Endothelial cell of umbilical vein (primary cell): ENCODE measurements at regions of chr2 and their contacts with region 1.

Region 1: DNA sequence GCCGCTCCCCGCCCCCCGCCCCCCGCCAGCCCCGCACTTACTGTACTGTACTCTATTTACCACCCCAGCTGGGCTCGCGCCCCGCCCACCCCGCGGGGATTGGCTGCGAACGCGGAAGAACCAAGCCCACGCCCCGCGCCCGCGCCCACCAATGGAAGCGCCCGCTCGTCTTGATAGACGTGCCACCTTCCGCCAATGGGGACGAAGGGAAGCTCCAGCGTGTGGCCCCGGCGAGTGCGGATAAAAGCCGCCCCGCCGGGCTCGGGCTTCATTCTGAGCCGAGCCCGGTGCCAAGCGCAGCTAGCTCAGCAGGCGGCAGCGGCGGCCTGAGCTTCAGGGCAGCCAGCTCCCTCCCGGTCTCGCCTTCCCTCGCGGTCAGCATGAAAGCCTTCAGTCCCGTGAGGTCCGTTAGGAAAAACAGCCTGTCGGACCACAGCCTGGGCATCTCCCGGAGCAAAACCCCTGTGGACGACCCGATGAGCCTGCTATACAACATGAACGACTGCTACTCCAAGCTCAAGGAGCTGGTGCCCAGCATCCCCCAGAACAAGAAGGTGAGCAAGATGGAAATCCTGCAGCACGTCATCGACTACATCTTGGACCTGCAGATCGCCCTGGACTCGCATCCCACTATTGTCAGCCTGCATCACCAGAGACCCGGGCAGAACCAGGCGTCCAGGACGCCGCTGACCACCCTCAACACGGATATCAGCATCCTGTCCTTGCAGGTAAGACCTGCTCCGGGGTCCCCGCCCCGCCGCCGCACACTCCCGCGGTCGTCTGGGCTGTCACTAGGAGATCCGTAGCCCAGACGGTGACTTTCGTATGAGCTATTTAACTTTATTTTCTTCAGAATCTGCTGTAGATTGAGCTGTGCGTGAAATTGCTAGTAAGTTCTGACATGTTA is at the start of gene ID2:
- DNase-seq: peak; percentile 99
- H3K4me3 ChIP-seq: peak within 1 kb of the TSS; percentile 49 to 73 (median 52)
- H3K27ac ChIP-seq: peak within 1 kb of the TSS; percentile 98
- H3K4me1 ChIP-seq: peaks cover 61% of the 10 kb centered on the region
- H3K27me3 ChIP-seq: peaks cover 8 to 25% of the 10 kb centered on the region in 2 experiments
- CTCF ChIP-seq: no peak
- POLR2A ChIP-seq: peak; percentile 99
- total RNA-seq, gene ID2: 4.1 and 4.7 TPM in 2 replicates

Region 2: GRCh38 chr2:6826081-6826913 is 1855.7 kb before region 1 on chr2:
- CTCF ChIA-PET with region 1: no interaction called
- POLR2A ChIA-PET with region 1: no interaction called
- dilution Hi-C with region 1: no loop called
- intact Hi-C with region 1: loop called (anchors 10 kb)
- DNase-seq: peak; percentile 60
- H3K4me3 ChIP-seq: no peak overlapping the region
- H3K27ac ChIP-seq: peak overlapping the region; percentile 52
- H3K4me1 ChIP-seq: peaks cover 12% of the 10 kb centered on the region
- H3K27me3 ChIP-seq: peaks cover 0 to 2% of the 10 kb centered on the region in 2 experiments
- CTCF ChIP-seq: peak; percentile 50 to 69
- POLR2A ChIP-seq: no peak

Region 3: DNA sequence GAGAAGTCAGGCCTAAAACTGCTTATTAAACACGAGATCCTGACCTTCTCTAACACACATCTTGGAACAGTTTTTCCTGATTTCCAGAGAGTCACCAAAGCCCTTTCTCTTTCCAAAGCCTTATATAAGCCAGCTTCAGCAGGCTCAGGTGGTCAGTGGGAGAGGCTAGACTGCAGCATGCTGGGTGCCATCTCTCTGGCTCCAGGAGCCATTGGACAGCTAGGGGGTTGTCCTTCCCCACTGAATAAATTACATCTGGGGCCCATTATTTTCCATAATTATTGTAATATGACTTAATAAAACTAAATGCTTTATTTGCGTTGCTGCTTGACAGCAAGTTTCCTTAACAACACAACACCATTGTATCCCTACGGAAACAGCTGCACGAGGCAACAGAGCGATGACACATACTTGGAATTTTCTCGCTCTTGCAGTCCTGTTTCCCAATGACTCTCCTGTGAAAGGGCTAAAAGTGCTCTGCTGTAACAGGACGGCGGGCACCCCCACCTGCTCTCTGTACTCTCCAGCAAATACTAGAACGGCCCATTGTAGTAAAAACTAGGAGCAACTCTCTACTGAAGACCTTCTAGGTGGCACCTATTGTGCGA is 1604.3 kb before region 1 on chr2:
- CTCF ChIA-PET with region 1: no interaction called
- POLR2A ChIA-PET with region 1: no interaction called
- dilution Hi-C with region 1: no loop called
- intact Hi-C with region 1: loop called (anchors 5 kb)
- DNase-seq: peak; percentile 89
- H3K4me3 ChIP-seq: no peak overlapping the region
- H3K27ac ChIP-seq: peak overlapping the region; percentile 67
- H3K4me1 ChIP-seq: peaks cover 6% of the 10 kb centered on the region
- H3K27me3 ChIP-seq: no peaks in the 10 kb centered on the region
- CTCF ChIP-seq: no peak
- POLR2A ChIP-seq: no peak

Region 4: GRCh38 chr2:7118606-7119503 is 1563.2 kb before region 1 on chr2:
- CTCF ChIA-PET with region 1: no interaction called
- POLR2A ChIA-PET with region 1: no interaction called
- dilution Hi-C with region 1: no loop called
- intact Hi-C with region 1: loop called (anchors 2 kb)
- DNase-seq: no peak
- H3K4me3 ChIP-seq: no peak overlapping the region
- H3K27ac ChIP-seq: no peak overlapping the region
- H3K4me1 ChIP-seq: no peaks in the 10 kb centered on the region
- H3K27me3 ChIP-seq: peaks cover 0 to 2% of the 10 kb centered on the region in 2 experiments
- CTCF ChIP-seq: peak in 1 of 2 donors; percentile 12
- POLR2A ChIP-seq: no peak

Region 5: DNA sequence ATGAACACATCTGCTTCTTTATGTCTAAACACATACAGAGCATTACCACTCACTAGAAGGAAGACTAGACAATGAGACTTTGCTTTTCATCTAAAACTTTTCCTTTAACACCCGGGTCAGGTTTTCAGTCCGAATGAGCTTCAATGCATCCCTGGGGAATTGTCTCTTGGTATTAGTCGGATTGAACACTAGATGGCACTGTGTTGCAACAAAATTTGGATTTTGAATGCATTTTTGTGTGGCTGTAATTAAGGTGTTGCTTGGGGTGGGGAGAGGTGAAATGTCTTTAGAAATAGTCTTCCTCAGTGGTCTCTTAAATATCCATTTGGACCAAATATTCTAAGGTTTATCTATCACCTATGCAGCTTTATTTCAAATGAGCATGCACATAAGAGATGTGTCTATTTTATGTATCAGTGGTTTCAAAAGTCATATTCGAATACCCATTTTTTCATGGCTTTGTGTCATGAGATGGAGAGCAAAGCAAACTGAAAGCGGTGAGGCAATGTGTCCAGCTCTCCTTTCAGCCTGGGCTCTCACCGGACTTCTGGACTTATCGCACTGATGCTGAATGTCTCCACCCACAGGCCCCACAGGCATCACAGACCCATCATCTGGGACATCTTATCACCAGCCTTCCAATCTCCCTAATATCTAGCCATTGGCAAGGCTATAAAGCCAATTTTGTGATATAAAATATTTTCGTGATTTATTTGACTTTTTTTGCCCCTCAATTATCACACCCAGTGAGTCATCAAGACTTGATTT is 1254.6 kb before region 1 on chr2:
- CTCF ChIA-PET with region 1: interaction called, 82 read pairs
- POLR2A ChIA-PET with region 1: interaction called, 11 read pairs
- dilution Hi-C with region 1: no loop called
- intact Hi-C with region 1: loop called (anchors 1 kb)
- DNase-seq: peak; percentile 54
- H3K4me3 ChIP-seq: no peak overlapping the region
- H3K27ac ChIP-seq: no peak overlapping the region
- H3K4me1 ChIP-seq: no peaks in the 10 kb centered on the region
- H3K27me3 ChIP-seq: no peaks in the 10 kb centered on the region
- CTCF ChIP-seq: peak; percentile 45
- POLR2A ChIP-seq: no peak

Region 6: DNA sequence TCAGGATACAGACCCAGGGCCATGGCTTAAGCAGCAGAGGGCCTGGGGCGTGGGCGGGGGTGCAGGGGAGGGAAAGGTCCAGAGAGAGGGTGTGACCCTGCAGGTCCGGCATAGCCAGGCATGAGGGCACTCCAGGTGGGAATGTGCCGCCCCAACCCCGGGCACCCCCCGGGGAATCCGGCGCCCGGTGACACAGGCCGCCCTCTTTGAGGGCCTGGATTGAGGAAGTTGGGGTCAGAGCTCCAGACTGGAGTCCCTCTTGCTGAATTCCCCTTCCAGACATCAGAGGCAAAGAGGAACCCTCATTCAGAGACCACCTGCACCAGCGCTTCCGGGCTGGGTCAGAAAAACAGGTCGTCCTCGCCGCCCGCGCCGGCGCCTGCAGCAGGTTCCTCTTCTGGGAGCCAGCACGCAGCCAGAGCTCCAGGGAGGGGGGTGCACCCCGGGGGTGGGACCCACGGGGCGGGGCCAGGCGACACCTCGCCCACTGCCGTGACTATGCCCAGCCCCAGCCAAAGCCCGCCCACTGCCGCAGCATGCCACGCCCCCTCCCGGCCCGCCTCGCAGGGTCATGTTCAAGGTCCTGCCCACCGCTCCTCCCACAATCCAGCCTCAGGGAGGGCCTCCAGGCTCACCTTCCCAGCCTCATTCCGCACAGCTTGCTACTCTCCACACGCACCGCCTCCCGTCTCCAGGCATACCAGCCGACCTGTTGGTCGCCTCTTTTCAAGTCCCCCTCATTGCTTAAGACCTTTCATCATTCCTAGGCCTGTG is 98.5 kb before region 1 on chr2:
- CTCF ChIA-PET with region 1: no interaction called
- POLR2A ChIA-PET with region 1: no interaction called
- dilution Hi-C with region 1: no loop called
- intact Hi-C with region 1: loop called (anchors 5 kb)
- DNase-seq: peak; percentile 38
- H3K4me3 ChIP-seq: no peak overlapping the region
- H3K27ac ChIP-seq: no peak overlapping the region
- H3K4me1 ChIP-seq: no peaks in the 10 kb centered on the region
- H3K27me3 ChIP-seq: no peaks in the 10 kb centered on the region
- CTCF ChIP-seq: no peak
- POLR2A ChIP-seq: no peak

Region 7: DNA sequence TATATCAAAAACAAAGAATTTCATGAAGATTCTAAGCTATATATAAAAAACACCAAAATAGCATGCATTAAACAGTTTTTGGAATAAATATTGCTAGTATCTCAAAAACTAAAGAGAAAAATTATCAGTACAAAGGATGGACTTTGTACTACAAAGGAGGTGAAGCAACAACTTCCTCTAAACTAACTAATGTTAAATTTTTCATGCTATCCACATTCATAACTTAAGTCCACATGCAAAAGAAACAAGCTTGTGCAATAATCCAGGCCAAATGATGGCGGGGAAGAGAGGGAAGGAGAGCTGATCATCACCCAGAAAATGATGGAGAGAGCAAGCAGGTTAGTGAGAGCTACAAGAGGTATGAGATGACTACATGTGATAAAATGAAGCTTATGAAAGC is 85.3 kb after region 1 on chr2:
- CTCF ChIA-PET with region 1: no interaction called
- POLR2A ChIA-PET with region 1: no interaction called
- dilution Hi-C with region 1: no loop called
- intact Hi-C with region 1: no loop called
- DNase-seq: no peak
- H3K4me3 ChIP-seq: no peak overlapping the region
- H3K27ac ChIP-seq: no peak overlapping the region
- H3K4me1 ChIP-seq: no peaks in the 10 kb centered on the region
- H3K27me3 ChIP-seq: no peaks in the 10 kb centered on the region
- CTCF ChIP-seq: no peak
- POLR2A ChIP-seq: no peak

Region 8: DNA sequence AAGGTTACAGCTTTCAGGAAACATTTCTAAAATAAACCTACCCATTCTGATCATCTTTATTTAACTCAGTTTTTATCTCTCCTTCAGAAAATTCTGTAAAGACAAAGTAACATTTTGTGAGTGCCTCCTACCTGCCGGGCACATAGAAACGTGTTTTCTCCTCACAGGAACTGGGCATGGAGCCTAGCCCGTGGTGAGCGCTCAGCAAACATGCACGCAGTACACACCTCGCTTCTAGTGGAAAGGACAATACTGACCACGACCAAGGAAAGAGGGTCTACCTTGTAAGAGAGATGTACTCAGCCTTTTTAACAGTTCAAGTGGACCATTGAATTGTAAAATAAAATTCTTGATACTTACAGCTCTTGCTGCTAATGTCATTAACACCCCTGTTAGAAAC is 180.2 kb after region 1 on chr2:
- CTCF ChIA-PET with region 1: no interaction called
- POLR2A ChIA-PET with region 1: no interaction called
- dilution Hi-C with region 1: no loop called
- intact Hi-C with region 1: no loop called
- DNase-seq: no peak
- H3K4me3 ChIP-seq: no peak overlapping the region
- H3K27ac ChIP-seq: no peak overlapping the region
- H3K4me1 ChIP-seq: no peaks in the 10 kb centered on the region
- H3K27me3 ChIP-seq: no peaks in the 10 kb centered on the region
- CTCF ChIP-seq: no peak
- POLR2A ChIP-seq: no peak

Region 9: DNA sequence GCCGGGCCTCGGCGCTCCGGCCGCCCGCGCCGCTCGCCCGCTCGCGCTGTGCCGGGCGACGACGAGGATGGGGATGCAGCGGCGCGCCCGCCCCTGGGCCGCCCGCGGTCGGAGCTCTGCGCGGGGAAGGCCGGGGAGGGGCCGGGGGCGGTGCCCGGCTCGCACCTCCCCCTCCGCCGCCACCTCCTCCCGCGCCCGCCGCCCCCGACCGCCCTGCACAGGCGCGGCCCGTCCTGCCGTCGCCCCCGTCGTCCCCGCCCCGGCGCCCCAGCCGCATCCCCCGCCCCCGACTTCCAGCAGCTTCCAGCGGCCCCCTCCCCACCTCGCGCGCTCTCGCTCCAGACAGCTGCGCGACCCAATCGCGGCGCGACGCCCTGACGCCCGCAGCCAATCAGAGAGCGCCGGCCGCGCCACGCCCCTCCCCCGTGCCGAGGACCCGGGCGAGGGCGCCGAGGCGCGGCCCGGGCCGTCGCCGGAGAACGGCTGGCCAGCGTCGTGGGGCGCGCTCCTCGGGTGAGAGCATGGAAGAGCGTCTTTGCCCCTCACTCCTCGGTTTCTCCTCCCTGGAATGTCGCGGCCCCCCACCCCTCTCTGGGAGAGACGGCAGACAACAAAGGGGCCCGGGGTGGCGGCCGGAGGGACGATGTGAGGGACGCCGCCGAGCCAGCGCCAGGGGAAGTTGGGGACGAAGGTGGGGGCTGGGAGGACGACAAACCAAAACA is 321.7 kb after region 1 on chr2 and contains the start of gene MBOAT2:
- CTCF ChIA-PET with region 1: no interaction called
- POLR2A ChIA-PET with region 1: no interaction called
- dilution Hi-C with region 1: no loop called
- intact Hi-C with region 1: loop called (anchors 2 kb)
- DNase-seq: peak; percentile 86
- H3K4me3 ChIP-seq: peak within 1 kb of the TSS; percentile 60 to 71 (median 70)
- H3K27ac ChIP-seq: peak within 1 kb of the TSS; percentile 88
- H3K4me1 ChIP-seq: peaks cover 11% of the 10 kb centered on the region
- H3K27me3 ChIP-seq: no peaks in the 10 kb centered on the region
- CTCF ChIP-seq: no peak
- POLR2A ChIP-seq: peak; percentile 88
- total RNA-seq, gene MBOAT2: 17.9 and 22.1 TPM in 2 replicates

Region 10: DNA sequence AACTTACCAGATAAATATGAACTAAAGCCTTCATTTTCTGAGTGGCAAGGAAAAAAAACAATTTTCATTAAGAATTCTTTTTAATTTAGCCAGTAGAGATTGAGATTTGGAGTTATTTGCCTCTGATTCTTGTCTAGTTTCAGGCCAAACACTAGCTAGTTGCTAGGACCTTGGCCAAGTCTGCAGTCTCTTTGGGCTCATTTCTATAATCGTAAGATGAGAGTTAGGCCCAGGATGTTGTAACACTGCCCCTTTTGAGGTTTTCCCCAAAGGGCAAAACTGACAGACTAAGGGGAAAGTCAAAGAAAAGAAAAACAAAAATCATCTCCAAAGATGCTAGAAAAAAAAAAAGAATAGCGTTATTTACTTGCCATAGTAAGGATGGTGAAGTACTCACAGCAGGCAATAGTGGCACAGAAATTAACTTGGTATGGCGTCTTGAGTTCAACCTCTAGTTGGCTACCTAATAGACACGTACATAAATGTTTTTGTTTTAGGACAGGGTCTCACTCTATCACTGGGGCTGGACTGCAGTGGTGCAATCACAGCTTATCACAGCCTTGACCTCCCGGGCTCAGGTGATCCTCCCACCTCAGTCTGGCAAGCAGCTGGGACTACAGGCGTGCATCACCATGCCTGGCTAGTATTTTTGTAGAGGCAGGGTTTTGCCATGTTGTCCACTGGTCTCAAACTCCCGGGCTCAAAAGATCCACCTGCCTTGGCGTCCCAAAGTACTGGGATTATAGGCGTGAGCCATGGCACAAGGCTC is 896.6 kb after region 1 on chr2:
- CTCF ChIA-PET with region 1: no interaction called
- POLR2A ChIA-PET with region 1: no interaction called
- dilution Hi-C with region 1: no loop called
- intact Hi-C with region 1: no loop called
- DNase-seq: no peak
- H3K4me3 ChIP-seq: no peak overlapping the region
- H3K27ac ChIP-seq: no peak overlapping the region
- H3K4me1 ChIP-seq: peaks cover 9% of the 10 kb centered on the region
- H3K27me3 ChIP-seq: no peaks in the 10 kb centered on the region
- CTCF ChIP-seq: no peak
- POLR2A ChIP-seq: no peak